B cell (primary cell): ENCODE measurements at regions of chr19 and their contacts with region 1.

Region 1: DNA sequence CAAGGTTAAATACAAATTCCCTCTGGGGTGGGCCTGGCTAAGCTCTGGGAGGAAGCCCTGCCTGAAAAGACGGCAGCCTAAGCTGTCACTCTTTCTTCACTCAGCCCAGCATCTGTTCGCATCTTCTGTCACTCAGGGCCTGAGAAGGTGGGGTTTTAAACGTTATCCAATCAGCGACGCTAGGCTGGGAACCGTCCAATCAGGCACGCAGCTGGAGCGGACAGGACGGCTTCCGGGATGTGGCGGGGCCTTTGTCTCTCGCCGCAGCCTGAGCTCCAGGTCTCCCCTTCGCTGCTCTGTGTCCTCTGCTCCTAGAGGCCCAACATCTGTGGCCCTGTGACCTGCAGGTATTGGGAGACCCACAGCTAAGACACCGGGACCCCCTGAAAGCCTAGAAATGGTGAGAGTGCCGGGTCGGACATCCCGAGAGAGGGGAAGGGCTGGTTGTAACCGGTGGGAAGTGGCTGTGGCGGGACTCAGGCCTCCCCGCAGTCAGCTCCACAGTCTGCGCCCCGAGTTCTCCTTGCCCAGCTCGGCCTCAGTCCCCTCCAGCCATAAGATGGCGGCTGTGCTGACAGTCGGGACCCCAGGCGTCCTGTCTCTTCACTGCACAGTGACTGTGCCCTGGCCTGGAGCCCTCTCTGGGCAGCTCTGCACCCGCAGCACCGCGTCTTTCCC is at the start of gene ZNF431:
- DNase-seq: peak; percentile 92
- ATAC-seq: peak; percentile 99
- H3K4me3 ChIP-seq: peak within 1 kb of the TSS; percentile 38 to 90 (median 78)
- H3K4me3 Mint-ChIP-seq: peak within 1 kb of the TSS; percentile 98
- H3K27ac ChIP-seq: peak within 1 kb of the TSS; percentile 80
- H3K27ac Mint-ChIP-seq: peak within 1 kb of the TSS; percentile 95
- H3K4me1 ChIP-seq: peaks cover 6 to 10% of the 10 kb centered on the region in 2 donors
- H3K4me1 Mint-ChIP-seq: peaks cover 27% of the 10 kb centered on the region
- H3K27me3 ChIP-seq: no peaks in the 10 kb centered on the region
- H3K27me3 Mint-ChIP-seq: no peaks in the 10 kb centered on the region
- CTCF ChIP-seq: no peak
- total RNA-seq, gene ZNF431: 40.7 and 50.0 TPM in 2 replicates

Region 2: GRCh38 chr19:20776083-20777076 is 365.5 kb before region 1 on chr19 and contains the start of gene ZNF66:
- CTCF ChIA-PET with region 1: interaction called, 3 read pairs
- POLR2A ChIA-PET with region 1: no interaction called
- intact Hi-C with region 1: loop called (anchors 10 kb)
- DNase-seq: peak; percentile 95
- ATAC-seq: peak; percentile 98
- H3K4me3 ChIP-seq: peak within 1 kb of the TSS; percentile 74 to 91 (median 80)
- H3K4me3 Mint-ChIP-seq: peak within 1 kb of the TSS; percentile 97
- H3K27ac ChIP-seq: peak within 1 kb of the TSS; percentile 66 to 90
- H3K27ac Mint-ChIP-seq: peak within 1 kb of the TSS; percentile 91
- H3K4me1 ChIP-seq: peaks cover 0 to 5% of the 10 kb centered on the region in 2 donors
- H3K4me1 Mint-ChIP-seq: peaks cover 29% of the 10 kb centered on the region
- H3K27me3 ChIP-seq: no peaks in the 10 kb centered on the region
- H3K27me3 Mint-ChIP-seq: no peaks in the 10 kb centered on the region
- CTCF ChIP-seq: no peak
- total RNA-seq, gene ZNF66: 25.0 and 27.7 TPM in 2 replicates

Region 3: DNA sequence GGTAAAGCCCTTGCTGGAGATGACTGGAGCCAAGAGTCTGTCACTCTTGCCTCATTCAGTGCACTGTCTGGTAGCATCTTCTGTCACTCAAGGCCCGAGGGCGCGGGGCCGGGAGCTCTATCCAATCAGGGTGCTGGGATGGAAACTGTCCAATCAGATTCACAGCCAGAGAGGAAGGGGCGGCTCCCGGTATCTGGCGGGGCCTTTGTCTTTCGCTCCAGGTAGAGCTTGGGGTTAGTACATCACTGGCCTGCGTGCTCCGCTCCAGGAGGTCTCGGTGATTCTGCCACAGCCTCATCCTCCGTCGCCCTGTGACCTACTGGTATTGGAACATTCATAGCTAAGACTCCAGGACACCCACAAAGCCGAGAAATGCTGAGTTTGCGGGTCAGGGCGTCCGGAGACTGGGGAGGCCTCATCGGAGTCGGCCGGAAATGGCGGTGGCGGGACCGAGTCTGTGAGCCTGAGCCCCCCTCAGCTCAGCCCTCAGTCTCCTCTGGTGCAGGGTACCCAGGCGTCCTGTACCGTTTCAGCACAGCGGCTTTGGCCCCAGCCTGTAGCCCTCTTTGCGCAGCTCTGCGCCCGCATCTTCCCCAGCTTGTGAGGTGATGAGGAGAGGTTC is 142.1 kb before region 1 on chr19:
- CTCF ChIA-PET with region 1: no interaction called
- POLR2A ChIA-PET with region 1: no interaction called
- intact Hi-C with region 1: loop called (anchors 1 kb)
- DNase-seq: peak; percentile 93
- ATAC-seq: peak; percentile 100
- H3K4me3 ChIP-seq: peak overlapping the region; percentile 34 to 84 (median 60)
- H3K4me3 Mint-ChIP-seq: peak overlapping the region; percentile 87
- H3K27ac ChIP-seq: no peak overlapping the region
- H3K27ac Mint-ChIP-seq: peak overlapping the region; percentile 61
- H3K4me1 ChIP-seq: peaks cover 0 to 5% of the 10 kb centered on the region in 2 donors
- H3K4me1 Mint-ChIP-seq: peaks cover 6% of the 10 kb centered on the region
- H3K27me3 ChIP-seq: no peaks in the 10 kb centered on the region
- H3K27me3 Mint-ChIP-seq: no peaks in the 10 kb centered on the region
- CTCF ChIP-seq: no peak

Region 4: DNA sequence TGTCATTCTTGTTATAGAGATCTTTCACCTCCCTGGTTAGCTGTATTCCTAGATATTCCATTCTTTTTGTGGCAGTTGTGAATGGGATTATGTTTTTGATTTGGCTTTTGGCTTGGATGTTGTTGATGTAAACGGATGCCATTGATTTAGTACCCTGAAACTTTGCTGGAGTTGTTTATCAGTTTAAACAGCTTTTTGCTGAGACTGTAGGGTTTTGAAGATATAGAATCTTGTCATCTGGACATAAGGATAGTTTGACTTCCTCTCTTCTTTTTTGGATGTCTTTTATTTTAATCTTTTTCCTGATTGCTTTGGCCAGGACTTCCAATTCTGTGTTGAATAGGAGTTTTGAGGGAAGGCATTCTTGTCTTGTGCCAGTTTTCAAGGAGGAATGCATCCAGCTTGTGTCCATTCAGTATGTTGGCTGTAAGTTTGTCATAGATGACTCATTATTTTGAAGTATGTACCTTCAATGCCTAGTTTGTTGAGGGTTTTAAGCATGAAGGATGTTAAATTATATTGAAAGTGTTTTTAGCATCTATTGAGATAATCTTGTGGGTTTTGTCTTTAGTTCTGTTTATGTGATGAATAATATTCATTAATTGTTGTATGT is 16.7 kb after region 1 on chr19:
- CTCF ChIA-PET with region 1: no interaction called
- POLR2A ChIA-PET with region 1: no interaction called
- intact Hi-C with region 1: no loop called
- DNase-seq: no peak
- ATAC-seq: no peak
- H3K4me3 ChIP-seq: no peak overlapping the region
- H3K4me3 Mint-ChIP-seq: no peak overlapping the region
- H3K27ac ChIP-seq: no peak overlapping the region
- H3K27ac Mint-ChIP-seq: no peak overlapping the region
- H3K4me1 ChIP-seq: no peaks in the 10 kb centered on the region
- H3K4me1 Mint-ChIP-seq: peaks cover 24% of the 10 kb centered on the region
- H3K27me3 ChIP-seq: no peaks in the 10 kb centered on the region
- H3K27me3 Mint-ChIP-seq: no peaks in the 10 kb centered on the region
- CTCF ChIP-seq: no peak

Region 5: GRCh38 chr19:21221693-21222092 is 79.8 kb after region 1 on chr19:
- CTCF ChIA-PET with region 1: no interaction called
- POLR2A ChIA-PET with region 1: no interaction called
- intact Hi-C with region 1: no loop called
- DNase-seq: no peak
- ATAC-seq: no peak
- H3K4me3 ChIP-seq: no peak overlapping the region
- H3K4me3 Mint-ChIP-seq: no peak overlapping the region
- H3K27ac ChIP-seq: no peak overlapping the region
- H3K27ac Mint-ChIP-seq: no peak overlapping the region
- H3K4me1 ChIP-seq: no peaks in the 10 kb centered on the region
- H3K4me1 Mint-ChIP-seq: no peaks in the 10 kb centered on the region
- H3K27me3 ChIP-seq: no peaks in the 10 kb centered on the region
- H3K27me3 Mint-ChIP-seq: no peaks in the 10 kb centered on the region
- CTCF ChIP-seq: no peak

Region 6: DNA sequence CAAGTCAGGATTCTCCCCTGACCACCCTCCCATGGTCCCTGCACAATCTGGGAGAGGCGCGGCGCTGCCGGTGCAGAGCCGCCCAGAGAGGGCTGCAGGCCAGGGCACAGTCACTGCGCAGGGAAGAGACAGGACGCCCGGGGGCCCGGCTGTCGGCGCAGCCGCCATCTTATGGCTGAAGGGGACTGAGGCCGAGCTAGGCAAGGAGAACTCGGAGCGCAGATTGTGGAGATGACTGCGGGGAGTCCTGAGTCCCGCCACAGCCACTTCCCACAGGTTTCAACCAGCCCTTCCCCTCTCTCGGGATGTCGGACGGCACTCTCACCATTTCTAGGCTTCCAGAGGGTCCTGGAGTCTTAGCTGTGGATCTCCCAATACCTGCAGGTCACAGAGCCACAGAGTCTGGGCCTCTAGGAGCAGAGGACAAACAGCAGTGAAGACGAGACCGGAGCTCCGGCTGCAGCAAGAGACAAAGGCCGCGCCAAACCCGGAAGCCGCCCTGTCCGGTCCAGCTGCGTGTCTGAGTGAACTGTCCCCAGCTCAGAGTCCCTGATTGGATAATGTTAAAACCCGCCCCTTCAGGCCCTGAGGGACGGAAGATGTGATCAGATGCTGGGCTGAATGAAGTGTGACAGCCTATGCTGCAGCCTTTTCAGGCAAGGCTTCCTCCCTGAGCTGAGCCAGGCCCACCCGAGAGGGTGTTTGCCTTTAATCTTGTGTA is 187.1 kb after region 1 on chr19 and contains the start of gene ZNF708:
- CTCF ChIA-PET with region 1: no interaction called
- POLR2A ChIA-PET with region 1: interaction called, 8 read pairs
- intact Hi-C with region 1: loop called (anchors 5 kb)
- DNase-seq: peak; percentile 88
- ATAC-seq: peak; percentile 99
- H3K4me3 ChIP-seq: peak within 1 kb of the TSS; percentile 85 to 100 (median 96)
- H3K4me3 Mint-ChIP-seq: peak within 1 kb of the TSS; percentile 99
- H3K27ac ChIP-seq: peak within 1 kb of the TSS; percentile 97 to 99
- H3K27ac Mint-ChIP-seq: peak within 1 kb of the TSS; percentile 99
- H3K4me1 ChIP-seq: peaks cover 9 to 16% of the 10 kb centered on the region in 2 donors
- H3K4me1 Mint-ChIP-seq: peaks cover 39% of the 10 kb centered on the region
- H3K27me3 ChIP-seq: no peaks in the 10 kb centered on the region
- H3K27me3 Mint-ChIP-seq: no peaks in the 10 kb centered on the region
- CTCF ChIP-seq: no peak
- total RNA-seq, gene ZNF708: 37.7 and 38.2 TPM in 2 replicates

Region 7: GRCh38 chr19:21767065-21767800 is 625.3 kb after region 1 on chr19 and contains the start of gene ZNF100:
- CTCF ChIA-PET with region 1: no interaction called
- POLR2A ChIA-PET with region 1: interaction called, 4 read pairs
- intact Hi-C with region 1: loop called (anchors 5 kb)
- DNase-seq: peak; percentile 89
- ATAC-seq: peak; percentile 97
- H3K4me3 ChIP-seq: peak within 1 kb of the TSS; percentile 77 to 91 (median 79)
- H3K4me3 Mint-ChIP-seq: peak within 1 kb of the TSS; percentile 96
- H3K27ac ChIP-seq: peak within 1 kb of the TSS; percentile 82 to 90
- H3K27ac Mint-ChIP-seq: peak within 1 kb of the TSS; percentile 90
- H3K4me1 ChIP-seq: peaks cover 9 to 10% of the 10 kb centered on the region in 2 donors
- H3K4me1 Mint-ChIP-seq: peaks cover 17% of the 10 kb centered on the region
- H3K27me3 ChIP-seq: no peaks in the 10 kb centered on the region
- H3K27me3 Mint-ChIP-seq: no peaks in the 10 kb centered on the region
- CTCF ChIP-seq: no peak
- total RNA-seq, gene ZNF100: 16.0 and 21.6 TPM in 2 replicates